ENCODE measurements at regions of chr14 and their contacts with region 1.

Region 1: DNA sequence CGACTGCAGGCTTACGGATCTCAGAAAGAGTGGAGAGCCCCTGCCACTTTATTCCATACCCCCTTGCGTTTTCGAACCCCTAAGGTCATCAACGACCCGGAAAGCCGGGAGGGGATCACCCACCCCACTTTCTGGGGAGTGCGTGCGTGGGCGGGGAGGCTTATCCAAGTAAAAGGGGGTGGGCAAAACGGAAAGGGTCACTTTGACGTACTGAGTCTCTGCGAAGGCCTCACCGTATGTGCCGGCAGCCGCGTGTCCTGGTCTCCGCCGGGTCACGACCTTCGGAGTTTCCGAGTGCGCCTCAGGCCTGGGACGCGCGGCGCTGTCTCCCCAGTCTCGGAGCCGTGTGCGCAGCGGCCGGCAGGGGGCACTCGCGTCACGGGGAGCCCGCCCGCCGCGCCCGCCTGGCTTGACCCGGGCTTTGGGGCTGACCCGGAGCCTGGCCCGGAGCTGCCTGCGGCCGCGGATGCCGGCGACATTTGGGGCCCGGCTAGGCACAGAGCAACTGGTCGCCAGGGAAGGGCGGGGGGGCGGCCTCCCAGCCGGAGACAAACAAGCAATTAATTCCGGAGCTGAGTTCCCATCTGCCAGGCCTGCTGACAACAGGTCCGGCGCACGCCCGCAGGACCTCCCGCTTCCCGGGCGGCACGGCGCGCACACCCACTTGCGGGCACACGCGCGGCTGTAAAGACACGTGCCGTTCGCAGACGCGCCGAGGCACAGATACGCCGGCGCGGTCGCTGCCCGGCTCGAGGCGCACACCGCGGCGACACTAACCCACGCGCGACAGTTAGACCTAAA is 890 bp upstream of the KIF26A start:
- DNase-seq: peak; percentile 66
- H3K4me3 Mint-ChIP-seq: peak overlapping the region; percentile 51
- H3K27ac Mint-ChIP-seq: no peak overlapping the region
- H3K4me1 Mint-ChIP-seq: peaks cover 10% of the 10 kb centered on the region
- H3K27me3 Mint-ChIP-seq: peaks cover 32% of the 10 kb centered on the region

Region 2: GRCh38 chr14:104563742-104564615 is 426.5 kb after region 1 on chr14:
- CTCF ChIA-PET with region 1: interaction called, 11 read pairs
- POLR2A ChIA-PET with region 1: no interaction called
- DNase-seq: peak; percentile 64
- H3K4me3 Mint-ChIP-seq: no peak overlapping the region
- H3K27ac Mint-ChIP-seq: no peak overlapping the region
- H3K4me1 Mint-ChIP-seq: no peaks in the 10 kb centered on the region
- H3K27me3 Mint-ChIP-seq: no peaks in the 10 kb centered on the region